ENCODE measurements at regions of chr3 and their contacts with region 1.

Region 1: DNA sequence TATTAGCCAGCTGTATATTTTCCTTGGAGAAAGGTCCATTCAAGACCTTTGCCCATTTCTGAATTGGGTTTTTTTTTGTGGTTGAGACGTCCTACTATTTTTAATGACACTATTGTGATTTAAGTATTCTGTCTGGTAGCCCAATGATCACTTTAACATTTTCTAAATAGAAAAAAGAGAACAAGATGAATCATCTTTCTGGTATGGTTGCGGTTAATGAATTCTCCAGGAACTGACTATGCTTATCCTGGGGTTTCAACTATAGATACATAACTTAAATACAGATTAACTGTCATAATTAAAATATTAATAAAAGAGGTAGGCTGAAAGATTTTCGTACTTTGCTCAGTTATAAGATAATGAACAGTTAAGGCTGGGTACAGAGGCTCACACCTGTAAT is 51.9 kb downstream of the PBRM1 start:
- DNase-seq: no peak
- ATAC-seq: no peak
- H3K4me3 ChIP-seq: no peak overlapping the region
- H3K27ac ChIP-seq: no peak overlapping the region
- H3K4me1 ChIP-seq: no peaks in the 10 kb centered on the region
- H3K27me3 ChIP-seq: no peaks in the 10 kb centered on the region
- CTCF ChIP-seq: no peak

Region 2: DNA sequence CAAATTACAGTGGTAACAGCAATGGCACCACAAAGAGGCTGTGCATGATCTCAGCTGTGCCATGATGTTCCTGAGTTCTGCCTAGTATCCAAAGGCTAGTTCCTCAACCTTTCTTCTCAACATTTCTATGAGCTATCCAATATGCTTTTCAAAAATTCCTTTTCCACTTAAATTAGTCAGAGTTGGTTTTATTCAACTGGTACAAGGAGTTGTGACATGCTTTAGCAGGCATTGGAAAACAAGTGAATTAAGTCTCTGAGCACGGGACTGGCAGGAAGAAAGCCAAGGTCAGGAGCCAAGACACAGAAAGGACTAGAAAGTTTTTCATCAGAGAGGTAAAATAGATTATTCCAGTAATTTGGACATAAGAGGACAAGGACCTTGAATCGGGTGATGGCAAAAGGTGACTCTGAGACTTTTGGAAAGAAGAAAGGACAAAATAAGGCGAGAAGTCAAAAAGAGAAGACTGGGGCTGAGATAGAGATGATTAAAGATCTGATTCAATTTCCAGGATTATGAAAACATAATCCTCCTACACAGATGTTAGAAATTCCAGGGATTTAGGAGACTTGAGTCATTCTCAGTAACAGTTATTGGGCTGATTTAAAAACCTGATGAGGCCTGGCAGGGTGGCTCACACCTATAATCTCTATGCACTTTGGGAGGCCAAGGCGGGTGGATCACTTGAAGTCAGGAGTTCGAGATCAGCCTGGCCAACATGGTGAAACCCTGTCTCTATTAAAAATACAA is 15.8 kb after region 1 on chr3:
- intact Hi-C with region 1: loop called in 1 of 2 experiments (anchors 2 kb)
- DNase-seq: no peak
- ATAC-seq: no peak
- H3K4me3 ChIP-seq: no peak overlapping the region
- H3K27ac ChIP-seq: no peak overlapping the region
- H3K4me1 ChIP-seq: no peaks in the 10 kb centered on the region
- H3K27me3 ChIP-seq: no peaks in the 10 kb centered on the region
- CTCF ChIP-seq: no peak